CD4-positive, alpha-beta T cell (primary cell): ENCODE measurements at regions of chr5 and their contacts with region 1.

Region 1: GRCh38 chr5:73201547-73202513 is 28.8 kb downstream of the TMEM174 start:
- DNase-seq: peak; percentile 47 to 77 (median 61)
- ATAC-seq: peak; percentile 94
- H3K4me3 ChIP-seq: no peak overlapping the region
- H3K4me3 Mint-ChIP-seq: no peak overlapping the region
- H3K27ac ChIP-seq: no peak overlapping the region
- H3K27ac Mint-ChIP-seq: no peak overlapping the region
- H3K4me1 ChIP-seq: peaks cover 7% of the 10 kb centered on the region
- H3K4me1 Mint-ChIP-seq: no peaks in the 10 kb centered on the region
- H3K27me3 ChIP-seq: peaks cover 42 to 44% of the 10 kb centered on the region in 2 experiments
- H3K27me3 Mint-ChIP-seq: peaks cover 84% of the 10 kb centered on the region
- CTCF ChIP-seq: peak; percentile 84

Region 2: GRCh38 chr5:72366324-72366976 is 835.4 kb before region 1 on chr5:
- CTCF ChIA-PET with region 1: no interaction called
- POLR2A ChIA-PET with region 1: no interaction called
- intact Hi-C with region 1: loop called in 1 of 2 experiments (anchors 5 kb)
- DNase-seq: peak in 7 of 14 experiments; percentile 3 to 60 (median 28)
- ATAC-seq: peak; percentile 44
- H3K4me3 ChIP-seq: no peak overlapping the region
- H3K4me3 Mint-ChIP-seq: no peak overlapping the region
- H3K27ac ChIP-seq: no peak overlapping the region
- H3K27ac Mint-ChIP-seq: no peak overlapping the region
- H3K4me1 ChIP-seq: no peaks in the 10 kb centered on the region
- H3K4me1 Mint-ChIP-seq: no peaks in the 10 kb centered on the region
- H3K27me3 ChIP-seq: no peaks in the 10 kb centered on the region
- H3K27me3 Mint-ChIP-seq: no peaks in the 10 kb centered on the region
- CTCF ChIP-seq: peak; percentile 51

Region 3: DNA sequence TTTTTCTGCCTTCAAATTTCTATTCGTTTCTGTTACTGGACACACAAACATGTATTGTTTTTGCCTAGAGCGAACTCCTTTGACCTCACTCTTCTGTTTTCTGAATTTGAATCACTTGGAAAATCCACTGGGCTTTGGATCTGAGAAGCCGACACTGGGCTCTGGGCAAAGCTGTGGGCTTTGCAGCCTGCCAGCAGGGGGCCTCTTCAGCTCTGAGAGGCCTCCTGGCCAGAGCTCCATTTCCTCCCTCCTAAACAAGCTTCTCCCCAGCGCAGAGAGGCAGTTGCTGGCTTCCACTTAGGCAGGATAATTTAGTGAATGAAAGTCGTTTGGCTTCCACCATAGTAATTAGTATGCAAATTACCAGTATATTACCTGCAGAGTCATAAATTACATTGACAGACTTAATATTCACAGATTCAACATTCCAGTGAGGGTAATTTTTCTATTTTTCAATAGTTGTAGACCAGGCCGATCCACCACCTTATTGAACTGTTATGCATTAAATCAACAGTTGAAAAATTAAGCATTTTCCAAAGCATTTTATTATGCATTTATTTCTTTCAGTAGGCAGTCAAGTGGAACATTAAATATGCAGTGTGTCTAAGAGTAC is 590.6 kb before region 1 on chr5:
- CTCF ChIA-PET with region 1: no interaction called
- POLR2A ChIA-PET with region 1: no interaction called
- intact Hi-C with region 1: loop called in 1 of 2 experiments (anchors 5 kb)
- DNase-seq: peak; percentile 2 to 64 (median 22)
- ATAC-seq: peak; percentile 64
- H3K4me3 ChIP-seq: no peak overlapping the region
- H3K4me3 Mint-ChIP-seq: no peak overlapping the region
- H3K27ac ChIP-seq: no peak overlapping the region
- H3K27ac Mint-ChIP-seq: no peak overlapping the region
- H3K4me1 ChIP-seq: no peaks in the 10 kb centered on the region
- H3K4me1 Mint-ChIP-seq: no peaks in the 10 kb centered on the region
- H3K27me3 ChIP-seq: no peaks in the 10 kb centered on the region
- H3K27me3 Mint-ChIP-seq: no peaks in the 10 kb centered on the region
- CTCF ChIP-seq: peak; percentile 80

Region 4: DNA sequence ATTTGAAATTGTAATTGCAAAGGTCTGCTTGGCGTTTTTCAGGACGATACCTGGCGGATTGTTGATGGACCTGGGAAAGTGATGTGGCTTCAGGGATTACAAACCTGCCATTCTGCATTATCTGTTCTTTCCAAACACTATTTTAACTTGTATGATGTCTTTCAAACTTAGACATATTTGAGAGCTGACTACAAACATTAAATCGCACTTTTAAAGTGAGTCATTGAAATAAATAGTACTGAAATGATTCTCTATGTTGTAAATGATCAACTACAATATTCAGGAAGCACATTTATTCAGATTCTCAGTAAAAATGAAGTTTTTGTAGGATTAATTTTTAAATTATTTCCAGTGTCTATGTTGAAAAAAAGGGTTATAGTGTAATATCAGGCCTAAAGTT is 113.8 kb before region 1 on chr5:
- CTCF ChIA-PET with region 1: no interaction called
- POLR2A ChIA-PET with region 1: no interaction called
- intact Hi-C with region 1: loop called (anchors 1 to 2 kb)
- DNase-seq: no peak
- ATAC-seq: no peak
- H3K4me3 ChIP-seq: no peak overlapping the region
- H3K4me3 Mint-ChIP-seq: no peak overlapping the region
- H3K27ac ChIP-seq: no peak overlapping the region
- H3K27ac Mint-ChIP-seq: no peak overlapping the region
- H3K4me1 ChIP-seq: no peaks in the 10 kb centered on the region
- H3K4me1 Mint-ChIP-seq: no peaks in the 10 kb centered on the region
- H3K27me3 ChIP-seq: no peaks in the 10 kb centered on the region
- H3K27me3 Mint-ChIP-seq: peaks cover 30% of the 10 kb centered on the region
- CTCF ChIP-seq: no peak